PC-9 (cell line): ENCODE measurements at regions of chr11 and their contacts with region 1.

Region 1: DNA sequence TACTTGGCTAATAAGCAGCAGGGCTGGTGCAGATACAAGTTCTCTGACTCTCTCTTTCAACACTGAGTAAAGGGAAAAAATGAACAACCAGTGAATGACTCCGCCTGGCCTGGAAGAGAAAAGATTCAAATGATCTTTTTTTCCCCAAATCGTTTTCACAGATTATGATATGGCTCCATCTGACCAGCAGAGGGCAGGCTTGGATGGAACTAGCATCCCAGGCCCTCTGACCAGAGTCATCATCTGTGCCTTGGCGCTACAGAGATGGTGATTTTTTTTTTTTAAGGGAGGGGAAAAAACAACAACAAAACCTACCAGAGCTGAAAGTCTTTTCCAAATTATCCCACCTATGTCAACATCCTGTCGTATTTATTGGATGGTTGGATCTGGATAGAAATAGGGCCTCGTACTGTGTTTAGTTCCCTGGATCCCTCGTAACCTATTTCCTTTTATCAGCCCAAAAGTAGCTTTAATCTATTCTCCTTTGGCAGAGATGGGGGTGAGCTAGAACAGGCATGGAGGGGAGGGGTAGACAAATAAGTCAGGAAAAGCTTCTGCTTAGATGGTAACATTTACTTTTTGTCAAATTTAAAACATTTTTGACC is 69.7 kb downstream of the PRSS23 start:
- DNase-seq: peak in 1 of 2 experiments; percentile 25
- H3K4me3 ChIP-seq: no peak overlapping the region
- H3K27ac ChIP-seq: no peak overlapping the region
- H3K4me1 ChIP-seq: no peaks in the 10 kb centered on the region
- H3K27me3 ChIP-seq: no peaks in the 10 kb centered on the region
- CTCF ChIP-seq: peak; percentile 95

Region 2: GRCh38 chr11:87299041-87299481 is 429.0 kb after region 1 on chr11:
- CTCF ChIA-PET with region 1: no interaction called
- POLR2A ChIA-PET with region 1: no interaction called
- intact Hi-C with region 1: no loop called
- DNase-seq: no peak
- H3K4me3 ChIP-seq: no peak overlapping the region
- H3K27ac ChIP-seq: no peak overlapping the region
- H3K4me1 ChIP-seq: peaks cover 10% of the 10 kb centered on the region
- H3K27me3 ChIP-seq: no peaks in the 10 kb centered on the region
- CTCF ChIP-seq: no peak

Region 3: DNA sequence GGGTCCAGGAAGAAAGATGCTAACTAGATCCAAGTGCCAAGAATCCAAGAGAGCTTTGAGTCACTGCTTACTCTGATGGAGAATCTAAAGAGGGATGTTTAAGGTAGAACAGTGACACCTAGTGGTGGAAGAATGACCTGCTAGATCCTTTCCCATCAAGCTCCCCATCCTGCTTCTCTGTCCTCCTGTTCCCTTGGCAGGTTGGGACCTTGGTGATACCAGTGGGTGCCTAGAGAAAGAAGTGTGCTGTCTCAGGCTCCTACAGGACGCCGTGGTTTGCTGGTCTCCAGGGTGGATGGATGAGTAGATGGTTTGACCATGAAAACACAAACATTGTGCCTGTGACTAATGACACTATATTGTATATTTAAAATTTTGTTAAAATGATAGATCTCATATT is 551.4 kb after region 1 on chr11:
- CTCF ChIA-PET with region 1: no interaction called
- POLR2A ChIA-PET with region 1: no interaction called
- intact Hi-C with region 1: loop called (anchors 2 kb)
- DNase-seq: peak in 1 of 2 experiments; percentile 59
- H3K4me3 ChIP-seq: no peak overlapping the region
- H3K27ac ChIP-seq: no peak overlapping the region
- H3K4me1 ChIP-seq: no peaks in the 10 kb centered on the region
- H3K27me3 ChIP-seq: no peaks in the 10 kb centered on the region
- CTCF ChIP-seq: peak; percentile 86